Panc1 (cell line): ENCODE measurements at regions of chr15 and their contacts with region 1.

Region 1: DNA sequence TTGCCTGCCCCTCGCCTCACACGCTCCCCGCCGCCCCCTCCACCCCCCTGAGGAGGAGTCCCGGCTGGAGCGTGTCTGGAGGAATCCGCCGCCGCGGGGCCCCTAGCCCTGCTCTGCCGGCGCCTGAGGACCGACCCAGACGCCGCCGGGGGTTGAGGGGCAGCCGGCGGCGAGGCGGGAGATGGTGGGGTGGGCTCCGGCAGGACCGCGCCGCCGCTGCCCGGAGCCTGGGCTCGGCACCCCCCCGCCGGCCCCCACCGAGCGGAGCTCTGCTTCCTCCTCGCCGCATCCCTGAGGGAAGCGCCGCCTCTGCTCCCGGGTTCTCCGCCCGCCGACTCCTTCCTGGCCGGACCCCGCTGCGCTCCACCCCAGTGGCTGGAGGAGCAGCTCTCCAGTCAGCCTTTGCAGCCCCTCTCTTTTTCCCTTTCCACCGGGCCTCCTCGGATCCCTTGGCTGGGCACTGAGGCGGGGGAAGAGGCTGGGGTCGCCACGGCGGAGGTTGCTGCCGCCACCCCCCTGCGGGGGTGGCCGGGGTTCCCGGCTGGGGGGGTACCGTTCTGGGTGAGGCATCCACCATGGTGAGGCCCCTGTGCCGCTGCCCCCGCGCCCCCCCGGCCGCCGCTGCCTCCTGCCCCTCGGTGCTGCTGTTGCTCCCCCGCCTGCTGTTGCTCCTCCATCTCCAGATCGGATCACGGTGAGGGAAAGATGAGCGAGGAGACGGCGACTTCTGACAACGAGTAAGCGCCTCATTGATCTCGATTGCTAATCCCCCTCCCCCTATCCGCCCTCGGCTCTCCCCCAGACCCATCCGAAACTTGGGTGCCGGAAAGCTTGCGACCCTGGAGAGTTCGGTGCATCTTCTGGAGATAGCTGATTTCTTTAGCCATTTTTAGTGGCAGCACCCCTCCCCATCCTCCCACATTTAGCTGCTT is at the start of gene SPRED1:
- DNase-seq: no peak
- ATAC-seq: peak; percentile 79
- H3K4me3 ChIP-seq: peak within 1 kb of the TSS; percentile 94 to 98
- H3K27ac ChIP-seq: peak within 1 kb of the TSS; percentile 89
- H3K4me1 ChIP-seq: peaks cover 26% of the 10 kb centered on the region
- H3K27me3 ChIP-seq: no peaks in the 10 kb centered on the region
- CTCF ChIP-seq: no peak
- total RNA-seq, gene SPRED1: 29.6 TPM

Region 2: GRCh38 chr15:37978231-37978630 is 274.5 kb before region 1 on chr15:
- CTCF ChIA-PET with region 1: interaction called, 11 read pairs
- POLR2A ChIA-PET with region 1: no interaction called
- in situ Hi-C with region 1: no loop called
- intact Hi-C with region 1: no loop called
- DNase-seq: no peak
- ATAC-seq: no peak
- H3K4me3 ChIP-seq: no peak overlapping the region
- H3K27ac ChIP-seq: no peak overlapping the region
- H3K4me1 ChIP-seq: no peaks in the 10 kb centered on the region
- H3K27me3 ChIP-seq: no peaks in the 10 kb centered on the region
- CTCF ChIP-seq: no peak

Region 3: GRCh38 chr15:38354315-38354929 is 101.7 kb after region 1 on chr15:
- CTCF ChIA-PET with region 1: no interaction called
- POLR2A ChIA-PET with region 1: no interaction called
- in situ Hi-C with region 1: no loop called
- intact Hi-C with region 1: loop called (anchors 5 kb)
- DNase-seq: peak; percentile 47
- ATAC-seq: peak; percentile 81
- H3K4me3 ChIP-seq: no peak overlapping the region
- H3K27ac ChIP-seq: no peak overlapping the region
- H3K4me1 ChIP-seq: no peaks in the 10 kb centered on the region
- H3K27me3 ChIP-seq: no peaks in the 10 kb centered on the region
- CTCF ChIP-seq: peak; percentile 79

Region 4: DNA sequence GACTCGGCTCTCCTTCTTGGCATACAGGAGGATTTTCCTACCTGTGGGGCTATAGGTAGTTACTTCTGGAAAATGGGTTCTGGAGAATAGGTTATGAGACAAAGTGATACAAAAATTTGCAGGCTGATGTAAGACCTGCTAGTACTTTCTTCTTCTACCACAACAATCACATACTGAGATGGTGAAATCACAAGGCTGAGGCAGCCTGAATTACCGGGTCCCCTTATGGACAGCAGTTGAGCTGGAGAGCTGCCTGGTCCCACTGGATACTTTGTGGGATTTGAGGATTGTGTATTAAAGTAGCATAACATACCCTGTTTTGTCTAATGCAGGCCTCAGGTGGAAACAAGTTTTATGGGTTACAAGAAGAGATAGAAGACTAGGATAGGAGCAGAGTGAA is 114.7 kb after region 1 on chr15:
- CTCF ChIA-PET with region 1: no interaction called
- POLR2A ChIA-PET with region 1: interaction called, 12 read pairs
- in situ Hi-C with region 1: no loop called
- intact Hi-C with region 1: no loop called
- DNase-seq: no peak
- ATAC-seq: no peak
- H3K4me3 ChIP-seq: no peak overlapping the region
- H3K27ac ChIP-seq: no peak overlapping the region
- H3K4me1 ChIP-seq: no peaks in the 10 kb centered on the region
- H3K27me3 ChIP-seq: peaks cover 4% of the 10 kb centered on the region; the same call in 1 of the 2 replicates
- CTCF ChIP-seq: no peak

Region 5: GRCh38 chr15:38474155-38474757 is 221.5 kb after region 1 on chr15:
- CTCF ChIA-PET with region 1: no interaction called
- POLR2A ChIA-PET with region 1: no interaction called
- in situ Hi-C with region 1: no loop called
- intact Hi-C with region 1: no loop called
- DNase-seq: peak; percentile 46
- ATAC-seq: peak; percentile 94
- H3K4me3 ChIP-seq: no peak overlapping the region
- H3K27ac ChIP-seq: no peak overlapping the region
- H3K4me1 ChIP-seq: no peaks in the 10 kb centered on the region
- H3K27me3 ChIP-seq: no peaks in the 10 kb centered on the region
- CTCF ChIP-seq: peak; percentile 71

Region 6: DNA sequence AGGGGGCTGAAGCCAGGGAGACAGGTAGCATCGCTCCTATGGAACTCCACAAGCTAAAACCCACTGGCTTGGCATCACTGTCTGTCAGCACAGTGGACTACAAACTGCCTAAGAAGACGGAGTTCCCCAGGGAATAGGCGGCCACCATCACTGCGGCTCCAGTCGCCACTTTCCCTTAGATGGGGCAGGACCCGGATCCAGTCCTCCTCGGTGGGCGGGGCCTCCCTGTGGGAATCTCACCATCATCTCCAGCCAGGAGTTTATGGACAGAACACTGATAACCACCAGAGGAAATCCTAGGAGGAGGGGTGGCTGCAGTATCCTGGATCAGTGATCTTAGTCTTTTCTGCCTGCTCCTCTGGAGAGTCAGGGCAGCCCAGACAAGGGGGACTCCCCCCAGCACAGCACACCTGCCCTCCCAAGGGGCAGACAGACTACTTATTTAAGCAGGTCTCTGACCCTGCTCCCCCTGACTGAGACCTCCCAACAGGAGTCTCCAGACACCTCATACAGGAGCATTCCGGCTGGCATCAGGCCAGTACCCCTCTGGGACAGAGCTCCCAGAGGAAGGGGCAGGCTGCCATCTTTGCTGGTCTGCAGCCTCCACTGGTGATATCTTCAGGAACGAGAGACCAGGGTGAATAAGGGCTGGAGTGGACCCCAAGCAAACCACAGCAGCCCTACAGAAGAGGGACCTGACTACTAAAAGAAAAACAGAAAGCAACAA is 747.4 kb after region 1 on chr15:
- CTCF ChIA-PET with region 1: no interaction called
- POLR2A ChIA-PET with region 1: no interaction called
- in situ Hi-C with region 1: no loop called
- intact Hi-C with region 1: no loop called
- DNase-seq: no peak
- ATAC-seq: no peak
- H3K4me3 ChIP-seq: no peak overlapping the region
- H3K27ac ChIP-seq: no peak overlapping the region
- H3K4me1 ChIP-seq: no peaks in the 10 kb centered on the region
- H3K27me3 ChIP-seq: no peaks in the 10 kb centered on the region
- CTCF ChIP-seq: no peak